ENCODE measurements at regions of chr17 and their contacts with region 1.

Region 1: GRCh38 chr17:62065598-62066468 is 755 bp upstream of the MED13 start:
- DNase-seq: peak; percentile 97 to 99
- ATAC-seq: peak; percentile 90 to 98 (median 94)
- H3K4me3 ChIP-seq: peak overlapping the region; percentile 66
- H3K4me3 Mint-ChIP-seq: peak overlapping the region; percentile 99
- H3K27ac ChIP-seq: peak overlapping the region; percentile 90
- H3K27ac Mint-ChIP-seq: peak overlapping the region; percentile 93 to 98
- H3K4me1 ChIP-seq: peaks cover 5% of the 10 kb centered on the region
- H3K4me1 Mint-ChIP-seq: peaks cover 33 to 39% of the 10 kb centered on the region in 2 donors
- H3K27me3 ChIP-seq: no peaks in the 10 kb centered on the region
- H3K27me3 Mint-ChIP-seq: no peaks in the 10 kb centered on the region
- CTCF ChIP-seq: peak; percentile 91

Region 2: GRCh38 chr17:61635913-61636432 is 429.9 kb before region 1 on chr17:
- intact Hi-C with region 1: loop called (anchors 2 kb)
- DNase-seq: peak; percentile 28 to 75
- ATAC-seq: peak in 2 of 3 donors; percentile 50 to 68
- H3K4me3 ChIP-seq: no peak overlapping the region
- H3K4me3 Mint-ChIP-seq: no peak overlapping the region
- H3K27ac ChIP-seq: no peak overlapping the region
- H3K27ac Mint-ChIP-seq: no peak overlapping the region
- H3K4me1 ChIP-seq: no peaks in the 10 kb centered on the region
- H3K4me1 Mint-ChIP-seq: no peaks in the 10 kb centered on the region
- H3K27me3 ChIP-seq: no peaks in the 10 kb centered on the region
- H3K27me3 Mint-ChIP-seq: peaks cover 41 to 88% of the 10 kb centered on the region in 2 donors
- CTCF ChIP-seq: peak; percentile 80

Region 3: DNA sequence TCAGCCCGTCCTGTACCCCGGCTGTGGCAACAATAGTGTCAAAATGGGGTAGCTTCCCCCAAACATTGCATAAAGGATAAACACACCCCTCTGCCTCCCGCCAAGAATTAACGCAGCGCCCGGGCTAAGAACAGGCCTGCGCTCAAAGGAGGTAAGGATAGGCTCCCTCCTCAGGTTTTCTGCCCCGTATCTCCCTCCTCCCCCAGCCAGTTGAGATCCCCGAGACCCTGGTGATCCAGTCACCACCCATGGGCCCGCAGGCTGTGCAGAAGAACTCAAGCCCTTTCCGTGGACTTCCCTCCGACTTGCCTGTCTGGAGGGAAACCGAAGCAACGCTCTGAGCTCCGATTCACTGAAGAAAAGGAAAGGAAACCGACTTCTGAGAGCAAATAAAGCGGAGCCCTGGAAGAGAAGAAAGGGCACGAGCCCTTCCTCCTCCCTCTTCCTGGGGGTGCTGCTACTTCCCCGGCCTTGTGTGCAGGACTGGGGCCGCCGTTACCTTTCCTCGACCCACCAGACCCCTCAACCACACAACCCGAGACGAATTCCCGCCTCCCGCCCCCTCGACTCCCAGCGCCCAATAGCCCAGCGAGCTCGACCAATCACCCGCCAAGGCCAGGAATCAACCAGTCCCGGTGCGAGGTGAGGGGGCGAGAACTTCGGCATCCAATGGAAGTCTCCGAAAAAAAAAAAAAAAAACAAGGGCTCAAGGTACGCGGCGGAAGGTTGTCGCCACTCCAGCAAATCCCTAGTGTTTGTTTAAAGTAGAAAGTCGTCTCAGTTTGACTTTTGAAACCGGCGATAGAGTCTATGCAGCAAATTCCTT is 202.6 kb before region 1 on chr17 and contains the start of gene BRIP1:
- intact Hi-C with region 1: loop called (anchors 1 kb)
- DNase-seq: peak; percentile 81 to 93
- ATAC-seq: peak; percentile 98 to 99 (median 98)
- H3K4me3 ChIP-seq: peak within 1 kb of the TSS; percentile 95
- H3K4me3 Mint-ChIP-seq: peak within 1 kb of the TSS; percentile 97
- H3K27ac ChIP-seq: peak within 1 kb of the TSS; percentile 68
- H3K27ac Mint-ChIP-seq: peak within 1 kb of the TSS; percentile 89 to 92
- H3K4me1 ChIP-seq: peaks cover 7% of the 10 kb centered on the region
- H3K4me1 Mint-ChIP-seq: peaks cover 16 to 18% of the 10 kb centered on the region in 2 donors
- H3K27me3 ChIP-seq: no peaks in the 10 kb centered on the region
- H3K27me3 Mint-ChIP-seq: no peaks in the 10 kb centered on the region
- CTCF ChIP-seq: no peak
- total RNA-seq, gene BRIP1: 2.7 to 3.7 (median 2.9) TPM

Region 4: GRCh38 chr17:61927200-61928165 is 138.3 kb before region 1 on chr17 and contains the start of gene INTS2:
- intact Hi-C with region 1: loop called (anchors 1 kb)
- DNase-seq: peak; percentile 96 to 98
- ATAC-seq: peak; percentile 89 to 94 (median 91)
- H3K4me3 ChIP-seq: peak within 1 kb of the TSS; percentile 93
- H3K4me3 Mint-ChIP-seq: peak within 1 kb of the TSS; percentile 91
- H3K27ac ChIP-seq: peak within 1 kb of the TSS; percentile 85
- H3K27ac Mint-ChIP-seq: peak within 1 kb of the TSS; percentile 93 to 98
- H3K4me1 ChIP-seq: peaks cover 14% of the 10 kb centered on the region
- H3K4me1 Mint-ChIP-seq: peaks cover 19 to 23% of the 10 kb centered on the region in 2 donors
- H3K27me3 ChIP-seq: no peaks in the 10 kb centered on the region
- H3K27me3 Mint-ChIP-seq: no peaks in the 10 kb centered on the region
- CTCF ChIP-seq: no peak
- total RNA-seq, gene INTS2: 14.2 to 21.0 (median 14.6) TPM

Region 5: GRCh38 chr17:62014526-62014925 is 51.3 kb before region 1 on chr17:
- intact Hi-C with region 1: no loop called
- DNase-seq: no peak
- ATAC-seq: no peak
- H3K4me3 ChIP-seq: no peak overlapping the region
- H3K4me3 Mint-ChIP-seq: no peak overlapping the region
- H3K27ac ChIP-seq: no peak overlapping the region
- H3K27ac Mint-ChIP-seq: peak overlapping the region in 1 of 2 donors; percentile 18
- H3K4me1 ChIP-seq: no peaks in the 10 kb centered on the region
- H3K4me1 Mint-ChIP-seq: peaks cover 0 to 4% of the 10 kb centered on the region in 2 donors
- H3K27me3 ChIP-seq: no peaks in the 10 kb centered on the region
- H3K27me3 Mint-ChIP-seq: no peaks in the 10 kb centered on the region
- CTCF ChIP-seq: no peak

Region 6: GRCh38 chr17:62052757-62053338 is 13.0 kb before region 1 on chr17:
- intact Hi-C with region 1: no loop called
- DNase-seq: no peak
- ATAC-seq: no peak
- H3K4me3 ChIP-seq: no peak overlapping the region
- H3K4me3 Mint-ChIP-seq: no peak overlapping the region
- H3K27ac ChIP-seq: no peak overlapping the region
- H3K27ac Mint-ChIP-seq: peak overlapping the region; percentile 19 to 27
- H3K4me1 ChIP-seq: no peaks in the 10 kb centered on the region
- H3K4me1 Mint-ChIP-seq: peaks cover 49 to 53% of the 10 kb centered on the region in 2 donors
- H3K27me3 ChIP-seq: no peaks in the 10 kb centered on the region
- H3K27me3 Mint-ChIP-seq: no peaks in the 10 kb centered on the region
- CTCF ChIP-seq: no peak

Region 7: GRCh38 chr17:62093188-62094155 is 27.6 kb after region 1 on chr17:
- intact Hi-C with region 1: no loop called
- DNase-seq: no peak
- ATAC-seq: no peak
- H3K4me3 ChIP-seq: no peak overlapping the region
- H3K4me3 Mint-ChIP-seq: no peak overlapping the region
- H3K27ac ChIP-seq: no peak overlapping the region
- H3K27ac Mint-ChIP-seq: no peak overlapping the region
- H3K4me1 ChIP-seq: no peaks in the 10 kb centered on the region
- H3K4me1 Mint-ChIP-seq: peaks cover 0 to 1% of the 10 kb centered on the region in 2 donors
- H3K27me3 ChIP-seq: no peaks in the 10 kb centered on the region
- H3K27me3 Mint-ChIP-seq: peaks cover 0 to 6% of the 10 kb centered on the region in 2 donors
- CTCF ChIP-seq: no peak

Region 8: GRCh38 chr17:62119373-62119772 is 53.5 kb after region 1 on chr17:
- intact Hi-C with region 1: no loop called
- DNase-seq: no peak
- ATAC-seq: no peak
- H3K4me3 ChIP-seq: no peak overlapping the region
- H3K4me3 Mint-ChIP-seq: no peak overlapping the region
- H3K27ac ChIP-seq: no peak overlapping the region
- H3K27ac Mint-ChIP-seq: no peak overlapping the region
- H3K4me1 ChIP-seq: no peaks in the 10 kb centered on the region
- H3K4me1 Mint-ChIP-seq: no peaks in the 10 kb centered on the region
- H3K27me3 ChIP-seq: no peaks in the 10 kb centered on the region
- H3K27me3 Mint-ChIP-seq: peaks cover 10 to 18% of the 10 kb centered on the region in 2 donors
- CTCF ChIP-seq: no peak